ENCODE measurements at regions of chr14 and their contacts with region 1.

Region 1: DNA sequence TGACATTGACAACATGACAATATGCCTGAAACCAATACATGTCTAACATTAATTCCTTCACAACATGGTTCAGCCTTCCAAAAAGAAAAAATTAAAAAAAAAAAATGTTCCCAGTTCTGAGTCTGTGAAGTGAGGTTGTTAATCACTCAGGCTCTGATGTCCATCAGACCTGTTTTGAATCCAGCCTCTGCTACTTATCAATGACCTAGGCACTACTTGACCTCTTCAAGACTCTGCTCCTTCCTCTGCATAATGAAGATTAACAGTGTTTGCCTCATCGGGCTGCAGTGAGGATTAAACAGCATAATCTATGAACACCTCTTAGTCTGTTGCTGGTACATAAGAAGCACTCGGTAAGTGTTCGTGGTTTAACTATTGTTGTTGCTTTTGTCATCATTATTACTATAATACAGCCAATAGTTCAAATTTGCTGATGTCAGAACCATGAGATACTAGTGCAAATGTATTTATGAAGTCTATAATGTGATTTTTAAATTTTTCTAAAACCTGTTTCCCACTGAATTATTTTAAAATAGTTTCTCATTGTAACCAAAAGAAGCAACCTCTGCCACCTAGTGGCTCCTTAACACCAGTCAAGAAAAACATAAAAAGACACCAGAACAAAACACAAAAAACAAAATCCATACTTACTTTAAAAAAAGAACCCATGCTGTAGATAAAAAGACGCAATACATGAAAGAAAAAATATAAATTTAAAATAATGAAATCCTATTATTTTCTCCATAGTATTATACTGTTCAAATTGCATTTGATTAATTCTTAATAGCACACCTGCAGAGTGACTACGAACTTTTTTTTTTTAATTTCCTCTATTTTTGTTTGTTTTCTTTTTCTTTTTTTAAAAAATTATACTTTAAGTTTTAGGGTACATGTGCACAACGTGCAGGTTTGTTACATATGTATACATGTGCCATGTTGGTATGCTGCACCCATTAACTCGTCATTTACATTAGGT is 20.3 kb upstream of the TMX1 start:
- DNase-seq: no peak
- ATAC-seq: peak in 2 of 4 donors; percentile 41 to 54
- H3K4me3 ChIP-seq: no peak overlapping the region
- H3K27ac ChIP-seq: no peak overlapping the region
- H3K4me1 ChIP-seq: no peaks in the 10 kb centered on the region
- H3K27me3 ChIP-seq: no peaks in the 10 kb centered on the region
- CTCF ChIP-seq: peak in 2 of 4 donors; percentile 34 to 54

Region 2: GRCh38 chr14:50954811-50955372 is 264.9 kb before region 1 on chr14:
- intact Hi-C with region 1: loop called in 1 of 3 experiments (anchors 5 kb)
- DNase-seq: no peak
- ATAC-seq: peak; percentile 67 to 92 (median 86)
- H3K4me3 ChIP-seq: no peak overlapping the region
- H3K27ac ChIP-seq: no peak overlapping the region
- H3K4me1 ChIP-seq: no peaks in the 10 kb centered on the region
- H3K27me3 ChIP-seq: no peaks in the 10 kb centered on the region
- CTCF ChIP-seq: peak in 3 of 4 donors; percentile 19 to 48 (median 41)

Region 3: GRCh38 chr14:51382506-51382905 is 162.7 kb after region 1 on chr14:
- intact Hi-C with region 1: no loop called
- DNase-seq: no peak
- ATAC-seq: no peak
- H3K4me3 ChIP-seq: no peak overlapping the region
- H3K27ac ChIP-seq: no peak overlapping the region
- H3K4me1 ChIP-seq: peaks cover 0 to 11% (median 7%) of the 10 kb centered on the region in 3 donors
- H3K27me3 ChIP-seq: no peaks in the 10 kb centered on the region
- CTCF ChIP-seq: no peak

Region 4: DNA sequence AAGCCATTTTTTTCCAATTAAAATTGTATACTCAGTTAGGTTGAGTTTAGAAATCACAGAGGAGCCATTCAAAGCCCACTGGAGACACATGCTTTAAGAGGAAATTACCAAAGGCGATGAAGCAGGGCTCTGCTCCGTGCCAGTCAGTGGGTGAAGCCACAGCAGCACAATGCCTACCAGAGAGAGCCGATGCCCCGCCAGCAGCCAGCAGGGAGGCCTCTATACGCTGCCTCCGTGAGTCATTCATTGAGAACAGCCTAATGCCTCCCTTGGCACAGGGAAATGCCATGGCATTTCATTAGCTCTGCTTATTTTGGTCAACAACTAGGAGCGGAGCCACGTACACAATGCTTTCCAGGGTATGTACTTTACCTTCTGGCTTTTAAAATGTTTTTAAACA is 234.1 kb after region 1 on chr14:
- intact Hi-C with region 1: no loop called
- DNase-seq: no peak
- ATAC-seq: no peak
- H3K4me3 ChIP-seq: no peak overlapping the region
- H3K27ac ChIP-seq: no peak overlapping the region
- H3K4me1 ChIP-seq: peaks cover 0 to under 1% (median 0%) of the 10 kb centered on the region in 3 donors
- H3K27me3 ChIP-seq: no peaks in the 10 kb centered on the region
- CTCF ChIP-seq: no peak

Region 5: GRCh38 chr14:51844081-51844881 is 624.5 kb after region 1 on chr14:
- intact Hi-C with region 1: no loop called
- DNase-seq: no peak
- ATAC-seq: no peak
- H3K4me3 ChIP-seq: no peak overlapping the region
- H3K27ac ChIP-seq: no peak overlapping the region
- H3K4me1 ChIP-seq: no peaks in the 10 kb centered on the region
- H3K27me3 ChIP-seq: no peaks in the 10 kb centered on the region
- CTCF ChIP-seq: no peak

Measured in pancreas (tissue), 10 donors.